T-cell (primary cell): ENCODE measurements at regions of chr7 and their contacts with region 1.

Region 1: GRCh38 chr7:5854738-5855137 is 25.9 kb upstream of the OCM start:
- DNase-seq: no peak
- ATAC-seq: no peak
- H3K4me3 ChIP-seq: no peak overlapping the region
- H3K4me3 Mint-ChIP-seq: no peak overlapping the region
- H3K27ac ChIP-seq: no peak overlapping the region
- H3K27ac Mint-ChIP-seq: no peak overlapping the region
- H3K4me1 ChIP-seq: peaks cover 4 to 34% of the 10 kb centered on the region in 2 experiments
- H3K4me1 Mint-ChIP-seq: peaks cover 20 to 25% (median 22%) of the 10 kb centered on the region in 3 donors
- H3K27me3 ChIP-seq: no peaks in the 10 kb centered on the region
- H3K27me3 Mint-ChIP-seq: no peaks in the 10 kb centered on the region

Region 2: GRCh38 chr7:5822742-5823503 is 31.8 kb before region 1 on chr7:
- CTCF ChIA-PET with region 1: interaction called in 1 of 2 experiments, 3 read pairs
- POLR2A ChIA-PET with region 1: interaction called in 1 of 2 experiments, 15 read pairs
- DNase-seq: peak; percentile 91 to 99 (median 99)
- ATAC-seq: peak; percentile 89 to 94 (median 92)
- H3K4me3 ChIP-seq: peak overlapping the region; percentile 80 to 93
- H3K4me3 Mint-ChIP-seq: peak overlapping the region; percentile 77 to 88 (median 85)
- H3K27ac ChIP-seq: peak overlapping the region; percentile 96
- H3K27ac Mint-ChIP-seq: peak overlapping the region; percentile 85 to 92
- H3K4me1 ChIP-seq: peaks cover 2 to 39% of the 10 kb centered on the region in 2 experiments
- H3K4me1 Mint-ChIP-seq: peaks cover 29 to 44% (median 38%) of the 10 kb centered on the region in 3 donors
- H3K27me3 ChIP-seq: peaks cover 0 to 11% of the 10 kb centered on the region in 2 experiments
- H3K27me3 Mint-ChIP-seq: no peaks in the 10 kb centered on the region

Region 3: DNA sequence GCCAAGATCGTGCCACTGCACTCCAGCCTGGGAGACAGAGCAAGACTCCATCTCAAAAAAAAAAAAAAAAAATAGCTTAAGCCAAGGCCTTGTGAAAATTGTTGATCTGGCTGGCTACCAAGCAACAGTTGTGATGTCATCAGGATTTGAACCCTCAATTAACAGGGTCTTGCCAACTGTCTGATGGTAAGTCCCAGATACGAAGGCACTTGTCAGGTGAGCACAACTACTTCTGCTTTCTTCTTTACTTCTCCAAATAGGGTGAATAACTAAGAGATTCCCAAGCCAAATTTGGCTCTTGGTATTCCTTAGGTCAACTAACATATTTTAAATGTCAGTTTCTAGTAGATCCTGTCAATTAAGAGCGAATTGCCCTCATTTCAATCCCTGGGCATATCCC is 223.8 kb after region 1 on chr7:
- CTCF ChIA-PET with region 1: interaction called in 1 of 2 experiments, 11 read pairs
- POLR2A ChIA-PET with region 1: no interaction called
- DNase-seq: no peak
- ATAC-seq: no peak
- H3K4me3 ChIP-seq: no peak overlapping the region
- H3K4me3 Mint-ChIP-seq: no peak overlapping the region
- H3K27ac ChIP-seq: no peak overlapping the region
- H3K27ac Mint-ChIP-seq: no peak overlapping the region
- H3K4me1 ChIP-seq: peaks cover 2 to 8% of the 10 kb centered on the region in 2 experiments
- H3K4me1 Mint-ChIP-seq: peaks cover 6 to 11% (median 6%) of the 10 kb centered on the region in 3 donors
- H3K27me3 ChIP-seq: no peaks in the 10 kb centered on the region
- H3K27me3 Mint-ChIP-seq: no peaks in the 10 kb centered on the region